ENCODE measurements at regions of chr1 and their contacts with region 1.

Region 1: GRCh38 chr1:109532365-109533136 is 7.1 kb upstream of the GPR61 start:
- DNase-seq: peak; percentile 77 to 83
- H3K4me3 ChIP-seq: no peak overlapping the region
- H3K4me3 Mint-ChIP-seq: no peak overlapping the region
- H3K27ac Mint-ChIP-seq: no peak overlapping the region
- H3K4me1 ChIP-seq: no peaks in the 10 kb centered on the region; the same call in 1 of the 2 replicates
- H3K4me1 Mint-ChIP-seq: no peaks in the 10 kb centered on the region
- H3K27me3 ChIP-seq: no peaks in the 10 kb centered on the region
- H3K27me3 Mint-ChIP-seq: no peaks in the 10 kb centered on the region
- CTCF ChIP-seq: peak; percentile 74 to 80

Region 2: DNA sequence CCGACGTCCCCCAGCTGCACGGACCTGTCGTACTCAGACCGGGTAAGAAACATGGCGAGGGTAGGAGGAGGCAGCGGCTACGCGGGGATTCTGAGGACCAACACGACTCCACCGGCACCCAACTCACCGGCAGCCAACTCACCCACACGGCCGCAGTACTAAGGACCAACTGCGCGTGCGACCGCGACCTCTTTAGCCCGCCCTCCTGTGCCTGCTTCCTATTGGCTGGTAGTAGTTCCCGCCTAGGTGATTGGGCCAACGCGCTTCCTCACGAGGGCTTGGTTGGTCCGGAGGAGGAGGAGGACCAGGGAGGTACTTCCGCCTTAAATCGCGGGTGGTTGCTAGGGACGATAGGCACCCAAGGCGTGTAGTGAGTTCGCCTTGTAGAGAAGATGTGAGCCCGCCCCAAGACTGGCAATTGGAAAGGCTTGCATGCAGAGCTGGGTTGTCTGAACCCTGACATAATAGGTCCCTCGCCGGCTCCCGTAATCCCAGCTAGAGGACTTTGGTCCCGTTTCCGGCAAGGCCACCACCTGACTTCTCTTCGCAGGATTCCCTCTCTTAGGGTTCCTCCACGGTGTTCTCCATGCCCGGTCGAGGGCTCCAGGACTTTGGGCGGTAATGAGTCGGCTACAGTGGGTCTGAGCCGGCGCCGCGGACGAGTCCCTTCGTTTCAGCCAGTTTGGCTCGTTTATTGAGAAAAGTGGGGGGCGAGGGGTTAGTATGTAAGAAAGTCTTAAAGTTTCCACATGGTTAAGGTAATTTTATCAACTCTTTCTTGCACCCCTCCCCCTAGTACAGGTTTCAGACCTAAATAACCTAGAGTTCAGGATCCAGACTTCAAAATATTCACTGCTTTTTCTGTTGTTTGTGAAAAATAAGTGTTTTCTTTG is 106.0 kb before region 1 on chr1 and contains the start of gene PSMA5:
- CTCF ChIA-PET with region 1: no interaction called
- POLR2A ChIA-PET with region 1: no interaction called
- intact Hi-C with region 1: loop called (anchors 5 kb)
- DNase-seq: peak; percentile 92 to 98
- H3K4me3 ChIP-seq: peak within 1 kb of the TSS; percentile 61
- H3K4me3 Mint-ChIP-seq: peak within 1 kb of the TSS; percentile 90
- H3K27ac Mint-ChIP-seq: peak within 1 kb of the TSS; percentile 95
- H3K4me1 ChIP-seq: peaks cover 14% of the 10 kb centered on the region
- H3K4me1 Mint-ChIP-seq: peaks cover 14% of the 10 kb centered on the region
- H3K27me3 ChIP-seq: no peaks in the 10 kb centered on the region
- H3K27me3 Mint-ChIP-seq: no peaks in the 10 kb centered on the region
- CTCF ChIP-seq: no peak
- total RNA-seq, gene PSMA5: 82.7 and 97.8 TPM in 2 replicates

Region 3: GRCh38 chr1:109493805-109494539 is 38.6 kb before region 1 on chr1 and contains the start of gene CYB561D1:
- CTCF ChIA-PET with region 1: interaction called, 131 read pairs
- POLR2A ChIA-PET with region 1: no interaction called
- intact Hi-C with region 1: loop called (anchors 1 kb)
- DNase-seq: peak; percentile 84 to 89
- H3K4me3 ChIP-seq: peak within 1 kb of the TSS; percentile 65
- H3K4me3 Mint-ChIP-seq: peak within 1 kb of the TSS; percentile 97
- H3K27ac Mint-ChIP-seq: peak within 1 kb of the TSS; percentile 69
- H3K4me1 ChIP-seq: no peaks in the 10 kb centered on the region
- H3K4me1 Mint-ChIP-seq: no peaks in the 10 kb centered on the region
- H3K27me3 ChIP-seq: no peaks in the 10 kb centered on the region
- H3K27me3 Mint-ChIP-seq: no peaks in the 10 kb centered on the region
- CTCF ChIP-seq: peak; percentile 73 to 76
- total RNA-seq, gene CYB561D1: 6.6 and 7.3 TPM in 2 replicates

Measured in Caco-2 (cell line).